K562 (cell line): ENCODE measurements at regions of chr12 and their contacts with region 1.

Region 1: DNA sequence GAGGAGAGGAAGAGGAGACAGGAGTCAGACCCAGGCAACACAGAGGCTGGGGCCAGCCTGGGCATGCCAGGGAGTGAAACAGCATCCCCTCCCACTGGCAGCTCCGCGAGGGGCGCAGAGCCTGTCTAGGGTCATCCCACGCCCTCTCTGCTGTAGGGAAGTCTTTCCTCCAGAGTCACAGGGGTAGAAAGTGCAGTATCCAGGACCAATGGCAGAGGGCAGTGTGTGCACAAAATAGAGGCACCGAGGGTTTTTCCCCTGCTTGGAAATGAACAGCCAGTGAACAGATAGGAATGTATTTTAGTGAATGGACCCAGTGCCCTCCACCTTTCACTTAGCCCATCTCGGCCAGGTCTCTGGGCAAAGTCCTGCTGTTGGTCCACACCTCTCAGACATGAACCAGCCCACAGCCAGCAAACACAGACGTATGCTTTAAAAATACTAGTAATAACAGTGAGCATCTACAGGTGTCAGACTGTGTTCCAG is 9.4 kb upstream of the KRT74 start:
- DNase-seq: peak; percentile 64 to 77 (median 70)
- ATAC-seq: peak; percentile 95
- H3K4me3 ChIP-seq: no peak overlapping the region
- H3K27ac ChIP-seq: no peak overlapping the region
- H3K4me1 ChIP-seq: peaks cover 0 to 6% of the 10 kb centered on the region in 2 experiments; a peak in 1 of 5 replicates
- H3K27me3 ChIP-seq: peaks cover 17 to 40% of the 10 kb centered on the region in 2 experiments; a peak in 4 of 5 replicates
- CTCF ChIP-seq: peak; percentile 84 to 94 (median 90)
- EP300 ChIP-seq: no peak
- POLR2A ChIP-seq: no peak
- RAD21 ChIP-seq: peak; percentile 95 to 98

Region 2: DNA sequence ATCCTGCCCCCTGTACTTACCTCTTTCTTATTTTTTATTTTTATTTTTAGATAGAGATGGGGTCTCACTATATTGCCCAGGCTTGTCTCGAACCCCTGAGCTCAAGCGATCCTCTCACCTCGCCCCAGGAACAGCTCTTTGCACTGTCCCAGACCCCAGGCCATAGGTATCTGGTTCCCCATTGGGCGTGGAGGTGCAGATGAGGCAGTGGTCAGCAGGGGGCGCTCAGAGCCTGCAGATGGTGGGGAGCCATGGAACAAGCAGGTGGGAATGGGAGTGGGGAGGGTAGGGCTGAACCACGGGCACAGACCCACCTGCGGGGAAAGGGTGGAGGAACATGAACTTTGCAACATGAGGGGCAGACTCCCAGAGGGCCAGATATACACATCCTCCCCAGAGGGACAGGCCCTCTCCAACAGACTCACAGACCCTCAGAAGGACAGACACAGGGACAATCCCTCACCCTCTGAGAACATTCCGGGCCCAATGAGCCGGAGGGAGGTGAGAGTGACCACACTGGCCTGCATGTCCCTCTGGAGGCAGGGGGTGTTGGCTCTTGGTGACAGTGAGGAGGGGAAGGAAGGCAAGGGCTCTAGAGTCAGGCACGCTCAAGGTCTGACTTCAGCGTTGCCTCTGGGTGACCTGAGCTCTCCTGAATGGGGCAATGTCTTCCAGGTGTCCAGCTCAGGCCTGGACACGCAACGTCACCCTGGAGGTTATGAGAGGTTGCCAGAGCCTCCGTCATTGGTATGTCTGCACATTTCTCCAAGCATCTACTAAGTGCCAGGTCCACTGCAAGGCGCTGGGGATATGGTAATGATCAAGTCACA is 426.1 kb before region 1 on chr12:
- CTCF ChIA-PET with region 1: no interaction called
- POLR2A ChIA-PET with region 1: no interaction called
- in situ Hi-C with region 1: no loop called
- intact Hi-C with region 1: loop called (anchors 10 kb)
- DNase-seq: peak; percentile 76 to 86 (median 82)
- ATAC-seq: peak; percentile 88
- H3K4me3 ChIP-seq: no peak overlapping the region
- H3K27ac ChIP-seq: no peak overlapping the region
- H3K4me1 ChIP-seq: peaks cover 0 to 6% of the 10 kb centered on the region in 2 experiments; a peak in 3 of 5 replicates
- H3K27me3 ChIP-seq: peaks cover 7 to 18% of the 10 kb centered on the region in 2 experiments; a peak in 4 of 5 replicates
- CTCF ChIP-seq: peak; percentile 90 to 96 (median 92)
- EP300 ChIP-seq: no peak
- POLR2A ChIP-seq: no peak
- RAD21 ChIP-seq: peak; percentile 81 to 90

Region 3: DNA sequence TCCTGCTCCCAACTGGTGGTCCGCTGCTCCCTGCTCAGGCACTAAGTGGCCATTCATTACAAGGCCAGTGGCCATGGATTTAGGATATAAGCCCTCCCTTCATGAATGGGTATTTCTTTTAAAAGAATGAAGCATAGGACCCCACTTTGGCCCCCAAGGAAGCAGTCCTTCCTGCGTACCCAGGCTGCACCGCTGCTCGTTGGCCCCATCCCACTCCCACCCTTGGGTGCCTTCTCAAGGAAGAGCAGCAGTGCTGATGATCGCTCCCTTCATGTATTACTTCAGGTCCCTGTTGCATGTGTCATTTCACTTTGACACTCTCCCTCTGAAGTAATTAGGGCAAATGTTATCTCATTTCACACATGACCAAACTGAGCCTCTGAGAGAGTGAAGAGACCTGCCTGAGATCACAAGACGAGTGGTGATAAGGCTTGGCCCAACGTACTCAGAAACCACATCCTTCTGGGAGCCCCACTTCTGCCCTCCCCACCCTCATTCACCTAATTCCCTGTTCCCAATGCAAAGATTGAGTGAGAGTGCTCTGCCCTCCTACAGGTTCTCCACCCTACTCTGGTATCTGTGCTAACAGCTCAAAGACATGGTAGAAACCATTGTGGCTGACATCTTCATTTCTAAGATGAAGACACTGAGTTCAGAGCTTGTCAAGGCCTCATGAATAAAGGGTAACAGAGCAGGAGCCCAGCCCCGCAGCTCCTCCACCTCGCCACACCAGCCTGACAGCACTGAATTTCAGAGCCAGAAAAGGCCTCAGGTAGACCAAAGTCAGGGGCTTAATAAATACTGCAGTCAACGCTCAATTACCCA is 79.3 kb after region 1 on chr12:
- CTCF ChIA-PET with region 1: no interaction called
- POLR2A ChIA-PET with region 1: no interaction called
- in situ Hi-C with region 1: no loop called
- intact Hi-C with region 1: loop called (anchors 5 kb)
- DNase-seq: peak; percentile 87 to 95 (median 91)
- ATAC-seq: peak; percentile 96
- H3K4me3 ChIP-seq: no peak overlapping the region
- H3K27ac ChIP-seq: peak overlapping the region; percentile 93
- H3K4me1 ChIP-seq: peaks cover 39 to 50% of the 10 kb centered on the region in 2 experiments
- H3K27me3 ChIP-seq: no peaks in the 10 kb centered on the region
- CTCF ChIP-seq: no peak
- EP300 ChIP-seq: peak; percentile 100
- POLR2A ChIP-seq: no peak
- RAD21 ChIP-seq: peak; percentile 6 to 34; a peak in 2 of 4 replicates

Region 4: GRCh38 chr12:52691076-52691840 is 108.2 kb after region 1 on chr12:
- CTCF ChIA-PET with region 1: no interaction called
- POLR2A ChIA-PET with region 1: no interaction called
- in situ Hi-C with region 1: no loop called
- intact Hi-C with region 1: loop called (anchors 10 kb)
- DNase-seq: peak in 2 of 4 experiments; percentile 19 to 22
- ATAC-seq: peak; percentile 41; the same call in 1 of the 3 replicates
- H3K4me3 ChIP-seq: no peak overlapping the region
- H3K27ac ChIP-seq: no peak overlapping the region
- H3K4me1 ChIP-seq: peaks cover 0 to 10% of the 10 kb centered on the region in 2 experiments; a peak in 1 of 5 replicates
- H3K27me3 ChIP-seq: peaks cover 11 to 42% of the 10 kb centered on the region in 2 experiments; a peak in 4 of 5 replicates
- CTCF ChIP-seq: no peak
- EP300 ChIP-seq: no peak
- POLR2A ChIP-seq: no peak
- RAD21 ChIP-seq: no peak

Region 5: GRCh38 chr12:52865090-52865944 is 282.3 kb after region 1 on chr12:
- CTCF ChIA-PET with region 1: interaction called, 34 read pairs
- POLR2A ChIA-PET with region 1: no interaction called
- in situ Hi-C with region 1: loop called (anchors 5 kb)
- intact Hi-C with region 1: loop called (anchors 1 kb)
- DNase-seq: peak; percentile 72 to 75 (median 74)
- ATAC-seq: peak; percentile 86
- H3K4me3 ChIP-seq: no peak overlapping the region
- H3K27ac ChIP-seq: no peak overlapping the region
- H3K4me1 ChIP-seq: peaks cover 0 to 1% of the 10 kb centered on the region in 2 experiments; a peak in 2 of 5 replicates
- H3K27me3 ChIP-seq: peaks cover 2 to 14% of the 10 kb centered on the region in 2 experiments; a peak in 2 of 5 replicates
- CTCF ChIP-seq: peak; percentile 82 to 90 (median 89)
- EP300 ChIP-seq: no peak
- POLR2A ChIP-seq: no peak
- RAD21 ChIP-seq: peak; percentile 83 to 87

Region 6: DNA sequence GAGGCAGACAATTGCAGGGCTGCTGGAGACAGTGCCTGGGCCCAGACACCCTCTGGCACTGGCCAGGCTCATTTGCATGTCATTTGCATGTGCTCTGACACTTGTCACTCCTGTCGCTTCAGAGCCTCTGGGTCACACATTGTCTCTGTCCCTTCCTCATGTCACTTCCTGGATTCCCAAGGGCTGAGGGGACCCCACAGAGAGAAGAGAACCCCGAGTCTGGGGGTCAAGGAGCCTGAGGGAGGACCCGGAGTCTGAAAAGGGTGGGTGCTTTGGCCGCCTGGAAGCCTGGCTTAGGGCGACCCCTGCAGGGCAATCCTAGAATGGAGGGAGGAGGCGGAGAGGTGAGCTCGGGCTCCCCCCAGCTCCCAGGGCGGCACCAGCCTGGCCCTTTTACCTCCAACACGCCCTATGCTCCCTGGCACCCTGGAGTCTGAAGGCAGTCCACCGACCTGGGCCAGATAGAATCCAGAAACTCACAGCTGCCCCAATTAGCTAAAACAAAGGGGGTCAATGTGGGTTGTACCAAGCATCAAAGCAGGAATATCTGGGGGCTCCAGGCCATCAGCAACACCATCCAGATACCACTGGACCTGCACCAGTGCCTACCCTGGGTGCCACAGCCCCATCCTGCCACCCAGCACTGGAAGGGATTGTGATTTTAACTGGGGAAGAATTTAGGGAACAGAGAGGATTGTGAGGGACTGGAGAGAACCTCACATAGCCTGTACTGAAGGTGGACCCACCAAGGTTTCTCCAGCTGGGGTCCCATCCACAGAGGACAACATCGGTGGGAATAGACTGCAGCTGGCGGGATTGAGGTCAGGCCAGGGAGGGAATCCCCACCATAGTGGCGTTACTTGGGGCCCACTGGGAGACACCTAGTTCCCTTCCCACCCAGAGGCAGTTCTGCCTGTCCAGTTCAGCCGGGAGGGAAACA is 287.6 kb after region 1 on chr12:
- CTCF ChIA-PET with region 1: interaction called, 34 read pairs
- POLR2A ChIA-PET with region 1: interaction called, 4 read pairs
- in situ Hi-C with region 1: loop called (anchors 5 kb)
- intact Hi-C with region 1: loop called (anchors 1 kb)
- DNase-seq: peak; percentile 85 to 89 (median 87)
- ATAC-seq: peak; percentile 79
- H3K4me3 ChIP-seq: no peak overlapping the region
- H3K27ac ChIP-seq: no peak overlapping the region
- H3K4me1 ChIP-seq: peaks cover 25 to 36% of the 10 kb centered on the region in 2 experiments
- H3K27me3 ChIP-seq: no peaks in the 10 kb centered on the region
- CTCF ChIP-seq: peak; percentile 97 to 99 (median 99)
- EP300 ChIP-seq: no peak
- POLR2A ChIP-seq: no peak
- RAD21 ChIP-seq: peak; percentile 98 to 99

Region 7: GRCh38 chr12:52879394-52880351 is 296.7 kb after region 1 on chr12:
- CTCF ChIA-PET with region 1: interaction called, 49 read pairs
- POLR2A ChIA-PET with region 1: interaction called, 5 read pairs
- in situ Hi-C with region 1: no loop called
- intact Hi-C with region 1: loop called (anchors 2 kb)
- DNase-seq: peak; percentile 83 to 90 (median 86)
- ATAC-seq: peak; percentile 95
- H3K4me3 ChIP-seq: peak overlapping the region; percentile 30
- H3K27ac ChIP-seq: peak overlapping the region; percentile 29; the same call in 1 of the 3 replicates
- H3K4me1 ChIP-seq: peaks cover 35% of the 10 kb centered on the region in 2 experiments
- H3K27me3 ChIP-seq: no peaks in the 10 kb centered on the region
- CTCF ChIP-seq: peak; percentile 83 to 100 (median 99)
- EP300 ChIP-seq: 0 out of 2 replicates have a peak, but pooled peaks have one; percentile 7
- POLR2A ChIP-seq: peak; percentile 43; the same call in 1 of the 2 replicates
- RAD21 ChIP-seq: peak; percentile 85 to 91